ENCODE measurements at regions of chr3 and their contacts with region 1.

Region 1: GRCh38 chr3:124552239-124552638 is 178.0 kb upstream of the UMPS start:
- DNase-seq: peak; percentile 78 to 85
- H3K4me3 ChIP-seq: no peak overlapping the region
- H3K27ac ChIP-seq: no peak overlapping the region
- H3K4me1 ChIP-seq: peaks cover 14% of the 10 kb centered on the region; the same call in 1 of the 2 replicates
- H3K27me3 ChIP-seq: peaks cover 41% of the 10 kb centered on the region
- CTCF ChIP-seq: no peak

Region 2: DNA sequence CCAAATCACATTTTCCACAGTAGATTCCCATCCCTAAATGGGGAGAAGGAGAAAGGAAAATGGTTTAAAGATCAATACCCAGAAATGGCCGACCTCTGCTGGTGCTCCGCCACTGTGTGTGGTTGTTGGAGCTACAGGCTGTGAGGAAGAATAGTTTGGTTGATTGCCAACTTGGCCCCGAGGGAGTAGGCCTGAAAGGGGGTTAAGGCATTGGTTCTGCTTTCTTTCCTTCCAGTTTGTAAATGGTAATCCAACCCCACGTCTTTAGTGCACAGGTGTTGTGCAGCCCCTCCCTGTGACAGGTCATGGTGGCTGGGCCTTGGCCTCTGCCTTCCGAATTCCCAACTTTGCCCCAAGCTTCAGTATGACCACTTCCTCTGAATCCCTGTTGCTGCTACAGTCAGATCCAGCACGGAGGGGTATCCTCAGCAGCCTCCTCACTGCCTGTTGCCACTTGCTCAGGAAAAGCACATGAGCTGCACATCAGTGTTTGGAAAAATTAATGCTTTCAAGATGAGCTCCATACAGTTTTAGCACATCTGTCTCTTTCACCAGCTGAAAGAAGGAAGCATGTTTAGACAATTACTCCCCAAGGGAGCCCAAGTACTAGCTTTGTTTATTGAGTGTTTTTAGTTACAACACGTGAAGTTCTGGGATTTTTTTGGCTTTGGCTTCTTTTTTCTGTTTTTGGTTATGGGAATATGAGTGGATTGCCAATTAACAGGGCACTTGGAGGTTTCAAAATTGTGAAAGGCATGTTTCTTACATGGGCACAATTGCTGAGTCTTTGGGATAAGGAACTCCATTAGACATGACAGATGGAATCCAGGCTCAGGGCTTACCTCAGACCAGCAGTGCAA is 468.0 kb before region 1 on chr3:
- CTCF ChIA-PET with region 1: no interaction called
- POLR2A ChIA-PET with region 1: no interaction called
- intact Hi-C with region 1: loop called (anchors 5 kb)
- DNase-seq: no peak
- H3K4me3 ChIP-seq: no peak overlapping the region
- H3K27ac ChIP-seq: no peak overlapping the region
- H3K4me1 ChIP-seq: no peaks in the 10 kb centered on the region
- H3K27me3 ChIP-seq: peaks cover 54% of the 10 kb centered on the region
- CTCF ChIP-seq: no peak

Region 3: GRCh38 chr3:124281453-124282316 is 270.6 kb before region 1 on chr3:
- CTCF ChIA-PET with region 1: no interaction called
- POLR2A ChIA-PET with region 1: no interaction called
- intact Hi-C with region 1: loop called (anchors 5 kb)
- DNase-seq: no peak
- H3K4me3 ChIP-seq: no peak overlapping the region
- H3K27ac ChIP-seq: no peak overlapping the region
- H3K4me1 ChIP-seq: no peaks in the 10 kb centered on the region
- H3K27me3 ChIP-seq: peaks cover 31% of the 10 kb centered on the region
- CTCF ChIP-seq: peak; percentile 47; the same call in 1 of the 2 replicates

Region 4: GRCh38 chr3:124351430-124352148 is 200.7 kb before region 1 on chr3:
- CTCF ChIA-PET with region 1: interaction called, 3 read pairs
- POLR2A ChIA-PET with region 1: no interaction called
- intact Hi-C with region 1: loop called (anchors 2 kb)
- DNase-seq: peak in 1 of 2 experiments; percentile 21
- H3K4me3 ChIP-seq: no peak overlapping the region
- H3K27ac ChIP-seq: no peak overlapping the region
- H3K4me1 ChIP-seq: no peaks in the 10 kb centered on the region
- H3K27me3 ChIP-seq: peaks cover 25% of the 10 kb centered on the region
- CTCF ChIP-seq: peak; percentile 64

Region 5: GRCh38 chr3:124384527-124384926 is 167.7 kb before region 1 on chr3:
- CTCF ChIA-PET with region 1: no interaction called
- POLR2A ChIA-PET with region 1: no interaction called
- intact Hi-C with region 1: no loop called
- DNase-seq: no peak
- H3K4me3 ChIP-seq: no peak overlapping the region
- H3K27ac ChIP-seq: no peak overlapping the region
- H3K4me1 ChIP-seq: no peaks in the 10 kb centered on the region
- H3K27me3 ChIP-seq: peaks cover 58% of the 10 kb centered on the region
- CTCF ChIP-seq: no peak

Region 6: GRCh38 chr3:124467980-124468902 is 84.0 kb before region 1 on chr3:
- CTCF ChIA-PET with region 1: no interaction called
- POLR2A ChIA-PET with region 1: no interaction called
- intact Hi-C with region 1: loop called (anchors 2 kb)
- DNase-seq: peak in 1 of 2 experiments; percentile 49
- H3K4me3 ChIP-seq: no peak overlapping the region
- H3K27ac ChIP-seq: no peak overlapping the region
- H3K4me1 ChIP-seq: no peaks in the 10 kb centered on the region
- H3K27me3 ChIP-seq: peaks cover 61% of the 10 kb centered on the region
- CTCF ChIP-seq: peak; percentile 92

Region 7: DNA sequence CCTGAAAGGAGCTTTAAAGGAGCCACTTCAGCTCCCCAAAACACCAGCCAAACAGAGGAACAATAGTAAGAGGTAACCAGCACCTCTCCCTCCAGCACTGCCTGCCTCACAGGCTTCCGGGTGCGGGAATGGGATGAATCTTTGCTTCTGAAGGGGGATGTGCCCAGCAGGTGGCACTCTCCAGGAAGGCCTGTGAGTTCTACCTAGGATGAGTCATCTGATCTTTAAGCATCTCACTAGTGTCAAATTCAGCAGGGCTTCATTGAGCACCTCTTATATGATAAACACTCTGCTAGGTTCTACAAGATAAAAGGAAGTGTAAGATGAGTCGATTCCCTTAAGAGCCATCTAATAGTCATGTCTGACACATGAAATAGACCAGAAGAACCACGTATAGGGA is 59.4 kb before region 1 on chr3:
- CTCF ChIA-PET with region 1: no interaction called
- POLR2A ChIA-PET with region 1: no interaction called
- intact Hi-C with region 1: loop called (anchors 1 kb)
- DNase-seq: peak; percentile 51 to 55
- H3K4me3 ChIP-seq: no peak overlapping the region
- H3K27ac ChIP-seq: no peak overlapping the region
- H3K4me1 ChIP-seq: no peaks in the 10 kb centered on the region
- H3K27me3 ChIP-seq: peaks cover 36% of the 10 kb centered on the region
- CTCF ChIP-seq: peak; percentile 67